Calu3 (cell line): ENCODE measurements at regions of chr3 and their contacts with region 1.

Region 1: DNA sequence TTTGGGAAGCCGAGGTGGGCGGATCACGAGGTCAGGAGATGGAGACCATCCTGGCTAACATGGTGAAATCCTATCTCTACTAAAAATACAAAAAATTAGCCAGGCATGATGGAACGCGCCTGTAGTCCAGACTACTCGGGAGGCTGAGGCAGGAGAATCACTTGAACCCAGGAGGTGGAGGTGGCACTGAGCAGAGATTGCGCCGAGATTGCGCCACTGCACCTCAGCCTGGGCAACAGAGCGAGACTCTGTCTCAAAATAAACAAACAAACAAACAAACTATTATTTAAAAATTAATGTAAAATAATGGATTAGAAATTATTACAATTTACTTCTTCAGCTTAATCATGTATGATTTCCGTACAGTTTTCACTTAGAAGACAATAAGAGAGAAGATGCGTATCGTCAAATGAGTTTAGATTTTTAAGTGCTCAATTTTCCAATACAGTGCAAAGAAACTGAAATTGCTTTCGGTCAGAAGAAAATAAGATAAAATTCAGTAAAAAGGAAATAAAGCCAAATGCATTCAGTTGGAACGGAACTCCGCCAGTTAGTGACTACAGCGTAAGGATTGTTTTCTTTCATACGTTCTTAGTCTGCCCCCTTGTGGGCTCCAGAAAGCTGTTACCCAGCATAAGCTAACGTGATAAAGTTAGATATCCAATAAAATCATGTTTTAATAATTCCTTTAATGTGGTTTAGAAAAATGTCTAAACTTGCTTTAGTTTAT is 24.8 kb downstream of the AADAC start:
- DNase-seq: peak; percentile 78
- H3K4me3 Mint-ChIP-seq: no peak overlapping the region
- H3K27ac Mint-ChIP-seq: no peak overlapping the region
- H3K4me1 Mint-ChIP-seq: peaks cover 26% of the 10 kb centered on the region
- H3K27me3 Mint-ChIP-seq: no peaks in the 10 kb centered on the region
- CTCF ChIP-seq: peak; percentile 73

Region 2: DNA sequence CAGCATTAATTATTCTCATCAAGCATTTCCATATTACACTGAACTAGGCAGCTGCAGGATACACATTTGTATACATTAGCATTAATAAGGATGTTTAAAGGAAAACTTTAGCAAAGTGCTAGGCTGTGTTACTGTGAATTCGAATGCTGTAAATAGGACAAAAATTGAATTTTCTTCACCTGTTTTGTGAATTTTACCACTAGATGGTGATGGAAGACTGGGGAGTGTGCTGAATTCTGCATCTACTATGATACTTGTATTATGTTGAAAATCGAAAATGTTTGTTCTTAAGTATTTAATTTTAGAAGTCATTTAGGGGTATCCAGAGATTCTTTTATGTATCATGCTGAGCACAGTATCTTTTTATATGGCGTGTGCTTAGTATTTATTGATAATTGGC is 548.1 kb before region 1 on chr3:
- CTCF ChIA-PET with region 1: no interaction called
- intact Hi-C with region 1: loop called (anchors 2 kb)
- DNase-seq: peak; percentile 25
- H3K4me3 Mint-ChIP-seq: no peak overlapping the region
- H3K27ac Mint-ChIP-seq: no peak overlapping the region
- H3K4me1 Mint-ChIP-seq: no peaks in the 10 kb centered on the region
- H3K27me3 Mint-ChIP-seq: no peaks in the 10 kb centered on the region
- CTCF ChIP-seq: peak; percentile 63

Region 3: DNA sequence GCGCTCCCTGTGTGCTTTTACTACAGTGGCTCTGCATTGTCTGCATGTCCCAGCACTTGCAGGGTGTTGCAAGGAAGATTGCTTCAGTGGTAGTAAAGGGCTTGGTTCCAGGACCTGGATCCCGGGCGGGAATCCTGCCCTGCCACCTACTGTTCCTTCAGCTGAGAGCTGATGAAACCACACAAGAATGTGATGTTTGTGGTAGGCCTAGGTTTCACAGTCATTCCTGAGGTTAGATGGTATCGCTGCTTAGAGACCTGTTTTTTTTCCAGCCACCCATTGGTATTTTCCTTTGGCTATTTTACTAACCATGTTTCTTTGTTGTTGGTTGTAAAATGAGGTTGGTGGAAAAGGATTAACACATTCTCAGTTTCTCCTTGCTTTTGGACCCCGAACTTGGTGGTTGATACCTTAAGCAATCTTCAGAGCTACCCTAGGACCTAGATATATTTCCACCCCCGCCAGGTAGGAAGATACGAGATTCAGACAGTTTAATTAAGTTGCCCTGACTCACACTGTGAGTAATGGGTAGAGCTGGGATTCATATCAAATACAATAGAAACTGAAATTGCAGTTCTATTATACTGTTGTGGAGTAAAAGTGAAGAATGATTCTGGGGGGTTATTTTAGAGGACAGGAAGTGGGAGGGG is 533.5 kb before region 1 on chr3:
- CTCF ChIA-PET with region 1: interaction called, 4 read pairs
- intact Hi-C with region 1: loop called (anchors 5 kb)
- DNase-seq: peak; percentile 91
- H3K4me3 Mint-ChIP-seq: peak overlapping the region; percentile 50
- H3K27ac Mint-ChIP-seq: peak overlapping the region; percentile 91
- H3K4me1 Mint-ChIP-seq: peaks cover 53% of the 10 kb centered on the region
- H3K27me3 Mint-ChIP-seq: no peaks in the 10 kb centered on the region
- CTCF ChIP-seq: no peak

Region 4: DNA sequence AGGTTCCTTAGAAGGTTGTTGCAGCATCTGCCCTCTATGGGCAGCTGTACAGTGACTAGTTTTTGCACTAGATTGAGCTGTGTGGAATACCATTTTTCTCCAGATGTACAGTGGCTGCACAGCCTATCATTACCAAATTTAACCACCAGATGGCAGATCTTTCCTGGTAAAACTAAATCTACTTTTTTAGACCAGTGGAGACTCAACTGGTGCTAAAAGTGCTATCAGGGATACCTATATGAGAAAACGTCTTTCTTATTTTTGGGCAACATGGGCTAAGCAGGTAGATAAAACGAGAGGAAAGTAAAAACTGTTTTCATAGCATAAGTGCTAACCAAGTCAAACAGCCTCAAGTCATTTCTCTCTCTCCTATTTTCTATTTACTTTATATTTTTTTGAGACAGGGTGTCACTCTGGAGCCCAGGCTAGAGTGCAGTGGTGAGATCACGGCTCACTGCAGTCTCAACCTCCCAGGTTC is 399.1 kb before region 1 on chr3:
- CTCF ChIA-PET with region 1: interaction called, 15 read pairs
- intact Hi-C with region 1: loop called (anchors 1 kb)
- DNase-seq: peak; percentile 66
- H3K4me3 Mint-ChIP-seq: no peak overlapping the region
- H3K27ac Mint-ChIP-seq: no peak overlapping the region
- H3K4me1 Mint-ChIP-seq: peaks cover 8% of the 10 kb centered on the region
- H3K27me3 Mint-ChIP-seq: no peaks in the 10 kb centered on the region
- CTCF ChIP-seq: peak; percentile 88

Region 5: DNA sequence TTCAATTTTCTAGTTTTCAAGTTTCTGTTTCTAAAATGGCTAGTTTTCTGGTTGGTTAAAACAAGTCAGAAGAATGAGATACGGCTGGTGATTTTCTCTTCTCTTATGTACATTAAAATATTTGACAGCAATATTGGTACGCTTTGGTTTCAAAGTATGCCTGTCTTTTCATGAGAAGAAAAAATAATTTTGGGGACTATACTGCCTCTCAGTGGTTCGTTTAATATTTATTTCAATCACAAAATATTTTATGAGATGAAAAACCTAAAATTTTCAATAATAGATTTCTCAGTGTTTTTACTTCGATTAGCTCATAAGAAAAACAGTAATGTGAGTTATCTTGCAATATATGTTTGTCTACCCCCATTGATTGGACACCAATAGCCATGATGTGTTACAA is 177.9 kb before region 1 on chr3:
- CTCF ChIA-PET with region 1: no interaction called
- intact Hi-C with region 1: loop called (anchors 2 kb)
- DNase-seq: no peak
- H3K4me3 Mint-ChIP-seq: no peak overlapping the region
- H3K27ac Mint-ChIP-seq: no peak overlapping the region
- H3K4me1 Mint-ChIP-seq: no peaks in the 10 kb centered on the region
- H3K27me3 Mint-ChIP-seq: no peaks in the 10 kb centered on the region
- CTCF ChIP-seq: no peak

Region 6: GRCh38 chr3:151770956-151771355 is 67.8 kb before region 1 on chr3:
- CTCF ChIA-PET with region 1: interaction called, 7 read pairs
- intact Hi-C with region 1: loop called (anchors 5 kb)
- DNase-seq: peak; percentile 67
- H3K4me3 Mint-ChIP-seq: no peak overlapping the region
- H3K27ac Mint-ChIP-seq: peak overlapping the region; percentile 84
- H3K4me1 Mint-ChIP-seq: peaks cover 74% of the 10 kb centered on the region
- H3K27me3 Mint-ChIP-seq: no peaks in the 10 kb centered on the region
- CTCF ChIP-seq: no peak

Region 7: GRCh38 chr3:151871639-151872468 is 33.1 kb after region 1 on chr3:
- CTCF ChIA-PET with region 1: no interaction called
- intact Hi-C with region 1: no loop called
- DNase-seq: no peak
- H3K4me3 Mint-ChIP-seq: no peak overlapping the region
- H3K27ac Mint-ChIP-seq: no peak overlapping the region
- H3K4me1 Mint-ChIP-seq: peaks cover 15% of the 10 kb centered on the region
- H3K27me3 Mint-ChIP-seq: no peaks in the 10 kb centered on the region
- CTCF ChIP-seq: no peak